ENCODE measurements at regions of chr9 and their contacts with region 1.

Region 1: GRCh38 chr9:3240656-3241268 is 285.0 kb downstream of the RFX3 start:
- DNase-seq: peak; percentile 52
- H3K4me3 ChIP-seq: no peak overlapping the region
- H3K27ac ChIP-seq: no peak overlapping the region
- H3K4me1 ChIP-seq: no peaks in the 10 kb centered on the region
- H3K27me3 ChIP-seq: no peaks in the 10 kb centered on the region
- CTCF ChIP-seq: peak; percentile 85 to 90

Region 2: GRCh38 chr9:3205421-3206095 is 35.2 kb before region 1 on chr9:
- CTCF ChIA-PET with region 1: no interaction called
- dilution Hi-C with region 1: no loop called
- in situ Hi-C with region 1: no loop called
- intact Hi-C with region 1: no loop called
- DNase-seq: no peak
- H3K4me3 ChIP-seq: no peak overlapping the region
- H3K27ac ChIP-seq: no peak overlapping the region
- H3K4me1 ChIP-seq: no peaks in the 10 kb centered on the region
- H3K27me3 ChIP-seq: no peaks in the 10 kb centered on the region
- CTCF ChIP-seq: no peak

Region 3: GRCh38 chr9:3441197-3441816 is 200.5 kb after region 1 on chr9:
- CTCF ChIA-PET with region 1: interaction called, 42 read pairs
- dilution Hi-C with region 1: no loop called
- in situ Hi-C with region 1: loop called (anchors 5 to 10 kb)
- intact Hi-C with region 1: loop called (anchors 1 kb)
- DNase-seq: peak; percentile 45
- H3K4me3 ChIP-seq: no peak overlapping the region
- H3K27ac ChIP-seq: no peak overlapping the region
- H3K4me1 ChIP-seq: no peaks in the 10 kb centered on the region
- H3K27me3 ChIP-seq: no peaks in the 10 kb centered on the region
- CTCF ChIP-seq: peak; percentile 73 to 74

Region 4: GRCh38 chr9:3508521-3509291 is 267.9 kb after region 1 on chr9:
- CTCF ChIA-PET with region 1: no interaction called
- dilution Hi-C with region 1: no loop called
- in situ Hi-C with region 1: no loop called
- intact Hi-C with region 1: loop called (anchors 1 kb)
- DNase-seq: peak; percentile 47
- H3K4me3 ChIP-seq: peak overlapping the region; percentile 33 to 60 (median 58)
- H3K27ac ChIP-seq: peak overlapping the region; percentile 93
- H3K4me1 ChIP-seq: no peaks in the 10 kb centered on the region
- H3K27me3 ChIP-seq: no peaks in the 10 kb centered on the region
- CTCF ChIP-seq: no peak

Region 5: DNA sequence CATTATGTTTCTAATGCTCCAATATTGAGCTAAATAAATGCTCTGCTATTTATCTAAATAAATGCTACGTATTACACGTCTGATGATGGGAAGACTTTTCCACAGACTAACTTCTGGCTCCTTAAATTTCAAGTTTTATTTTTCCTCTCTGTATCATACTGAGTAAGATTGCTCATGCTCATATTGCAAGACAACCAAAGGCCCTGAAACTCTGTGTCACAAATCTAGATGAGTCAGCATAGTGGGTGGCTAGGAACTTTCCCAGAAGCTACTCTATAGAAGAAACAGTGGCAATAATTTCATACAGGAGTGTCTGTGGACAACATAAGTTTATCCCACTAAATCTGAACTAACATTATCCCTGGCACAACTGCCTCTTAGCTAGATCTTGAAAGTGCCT is 338.0 kb after region 1 on chr9:
- CTCF ChIA-PET with region 1: no interaction called
- dilution Hi-C with region 1: no loop called
- in situ Hi-C with region 1: no loop called
- intact Hi-C with region 1: no loop called
- DNase-seq: peak; percentile 83
- H3K4me3 ChIP-seq: no peak overlapping the region
- H3K27ac ChIP-seq: no peak overlapping the region
- H3K4me1 ChIP-seq: no peaks in the 10 kb centered on the region
- H3K27me3 ChIP-seq: no peaks in the 10 kb centered on the region
- CTCF ChIP-seq: no peak

Region 6: GRCh38 chr9:4375424-4376200 is 1134.8 kb after region 1 on chr9:
- CTCF ChIA-PET with region 1: no interaction called
- dilution Hi-C with region 1: no loop called
- in situ Hi-C with region 1: no loop called
- intact Hi-C with region 1: loop called (anchors 10 kb)
- DNase-seq: peak; percentile 56
- H3K4me3 ChIP-seq: no peak overlapping the region
- H3K27ac ChIP-seq: no peak overlapping the region
- H3K4me1 ChIP-seq: peaks cover 6% of the 10 kb centered on the region
- H3K27me3 ChIP-seq: no peaks in the 10 kb centered on the region
- CTCF ChIP-seq: peak; percentile 60